Dorsolateral prefrontal cortex (tissue), 120 donors: ENCODE measurements at regions of chr15 and their contacts with region 1.

Region 1: DNA sequence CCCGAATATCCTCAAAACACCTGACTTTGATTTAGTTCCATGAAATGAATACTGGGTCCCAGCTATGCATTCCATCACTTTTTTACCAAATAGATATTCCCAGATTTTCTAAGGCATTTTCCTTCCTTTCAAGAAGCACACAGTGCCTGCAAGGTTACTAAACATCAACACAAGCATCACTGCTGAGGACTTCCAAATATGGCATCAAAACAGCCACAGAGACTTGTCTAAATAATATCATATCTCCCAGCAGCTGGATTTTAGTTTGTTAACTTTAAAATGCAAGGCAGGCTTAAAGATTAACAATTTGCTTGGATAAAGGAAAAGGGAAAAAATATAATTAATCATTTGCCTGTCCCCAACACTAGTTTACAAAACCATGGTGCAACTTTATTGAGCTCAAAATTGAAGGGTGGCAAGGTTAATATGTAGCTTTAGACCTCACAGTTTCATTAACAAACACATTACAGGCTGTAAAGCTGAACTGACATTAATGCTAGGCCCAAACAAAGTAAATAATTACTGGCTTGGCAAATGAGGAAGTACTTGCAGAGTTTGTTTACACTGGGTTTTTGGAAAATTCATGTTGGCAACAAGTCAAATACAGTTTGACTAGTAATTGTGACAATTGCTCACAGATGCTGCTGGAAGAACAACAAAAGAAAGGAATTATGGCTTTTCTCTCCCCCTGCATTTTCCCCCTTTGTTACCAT is 401.7 kb upstream of the CDIN1 start:
- DNase-seq: no peak
- H3K4me3 ChIP-seq: no peak overlapping the region
- H3K27ac ChIP-seq: peak overlapping the region in 58 of 59 donors; percentile 11 to 98 (median 84)
- H3K27me3 ChIP-seq: no peaks in the 10 kb centered on the region
- CTCF ChIP-seq: no peak

Region 2: GRCh38 chr15:36109943-36110658 is 67.6 kb before region 1 on chr15:
- intact Hi-C with region 1: no loop called
- DNase-seq: no peak
- H3K4me3 ChIP-seq: no peak overlapping the region
- H3K27ac ChIP-seq: no peak overlapping the region
- H3K27me3 ChIP-seq: no peaks in the 10 kb centered on the region
- CTCF ChIP-seq: no peak

Region 3: GRCh38 chr15:36130641-36131310 is 47.0 kb before region 1 on chr15:
- intact Hi-C with region 1: no loop called
- DNase-seq: no peak
- H3K4me3 ChIP-seq: no peak overlapping the region
- H3K27ac ChIP-seq: no peak overlapping the region
- H3K27me3 ChIP-seq: no peaks in the 10 kb centered on the region
- CTCF ChIP-seq: no peak

Region 4: GRCh38 chr15:36407647-36408046 is 229.9 kb after region 1 on chr15:
- intact Hi-C with region 1: loop called in 1 of 2 experiments (anchors 10 kb)
- DNase-seq: no peak
- H3K4me3 ChIP-seq: no peak overlapping the region
- H3K27ac ChIP-seq: peak overlapping the region in 11 of 59 donors; percentile 7 to 78 (median 41)
- H3K27me3 ChIP-seq: no peaks in the 10 kb centered on the region
- CTCF ChIP-seq: no peak